BJ (cell line): ENCODE measurements at regions of chr6 and their contacts with region 1.

Region 1: GRCh38 chr6:25312703-25313501 is 33.7 kb downstream of the CARMIL1 start:
- DNase-seq: peak; percentile 62
- H3K4me3 ChIP-seq: peak overlapping the region; percentile 4; the same call in 1 of the 2 replicates
- H3K27me3 ChIP-seq: no peaks in the 10 kb centered on the region
- CTCF ChIP-seq: peak; percentile 35; the same call in 1 of the 2 replicates

Region 2: GRCh38 chr6:25297039-25297441 is 15.9 kb before region 1 on chr6:
- CTCF ChIA-PET with region 1: interaction called, 3 read pairs
- POLR2A ChIA-PET with region 1: interaction called, 24 read pairs
- DNase-seq: peak; percentile 17
- H3K4me3 ChIP-seq: no peak overlapping the region
- H3K27me3 ChIP-seq: no peaks in the 10 kb centered on the region
- CTCF ChIP-seq: no peak

Region 3: GRCh38 chr6:25342802-25343201 is 29.9 kb after region 1 on chr6:
- CTCF ChIA-PET with region 1: no interaction called
- POLR2A ChIA-PET with region 1: interaction called, 10 read pairs
- DNase-seq: peak; percentile 41
- H3K4me3 ChIP-seq: no peak overlapping the region
- H3K27me3 ChIP-seq: peaks cover 2% of the 10 kb centered on the region; the same call in 1 of the 2 replicates
- CTCF ChIP-seq: no peak